ENCODE measurements at regions of chrX and their contacts with region 1.

Region 1: DNA sequence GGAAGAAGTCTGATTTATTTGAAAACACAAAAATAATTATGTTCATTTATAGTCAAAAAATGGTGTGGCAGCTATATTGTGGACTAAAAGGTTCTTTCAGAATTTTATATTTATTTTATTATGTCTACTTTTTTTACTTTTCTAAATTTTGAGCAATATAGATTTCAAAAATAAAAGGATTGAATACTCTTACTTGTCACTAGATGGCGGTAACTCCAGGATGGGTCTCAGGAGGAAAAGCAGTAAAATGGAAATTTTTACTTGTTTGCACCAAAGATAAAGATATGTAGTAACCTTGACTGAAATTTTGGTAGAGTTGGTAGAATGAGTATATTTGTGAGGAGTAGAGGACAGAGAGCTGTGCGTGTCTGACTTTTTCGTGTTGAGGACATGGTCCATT is 14.5 kb upstream of the DACH2 start:
- DNase-seq: peak; percentile 39
- H3K4me3 ChIP-seq: no peak overlapping the region
- H3K27ac ChIP-seq: no peak overlapping the region
- H3K4me1 ChIP-seq: no peaks in the 10 kb centered on the region
- H3K27me3 ChIP-seq: no peaks in the 10 kb centered on the region
- CTCF ChIP-seq: peak; percentile 72

Region 2: GRCh38 chrX:86946569-86946968 is 812.8 kb after region 1 on chrX:
- CTCF ChIA-PET with region 1: no interaction called
- POLR2A ChIA-PET with region 1: no interaction called
- intact Hi-C with region 1: loop called (anchors 5 kb)
- DNase-seq: peak; percentile 28
- H3K4me3 ChIP-seq: no peak overlapping the region
- H3K27ac ChIP-seq: no peak overlapping the region
- H3K4me1 ChIP-seq: no peaks in the 10 kb centered on the region
- H3K27me3 ChIP-seq: no peaks in the 10 kb centered on the region
- CTCF ChIP-seq: peak; percentile 71

Region 3: GRCh38 chrX:87299563-87300160 is 1165.9 kb after region 1 on chrX:
- CTCF ChIA-PET with region 1: no interaction called
- POLR2A ChIA-PET with region 1: no interaction called
- intact Hi-C with region 1: loop called (anchors 5 kb)
- DNase-seq: peak; percentile 24
- H3K4me3 ChIP-seq: no peak overlapping the region
- H3K27ac ChIP-seq: no peak overlapping the region
- H3K4me1 ChIP-seq: no peaks in the 10 kb centered on the region
- H3K27me3 ChIP-seq: no peaks in the 10 kb centered on the region
- CTCF ChIP-seq: peak; percentile 67

Measured in A673 (cell line).